Transverse colon (tissue), 4 donors: ENCODE measurements at regions of chr18 and their contacts with region 1.

Region 1: DNA sequence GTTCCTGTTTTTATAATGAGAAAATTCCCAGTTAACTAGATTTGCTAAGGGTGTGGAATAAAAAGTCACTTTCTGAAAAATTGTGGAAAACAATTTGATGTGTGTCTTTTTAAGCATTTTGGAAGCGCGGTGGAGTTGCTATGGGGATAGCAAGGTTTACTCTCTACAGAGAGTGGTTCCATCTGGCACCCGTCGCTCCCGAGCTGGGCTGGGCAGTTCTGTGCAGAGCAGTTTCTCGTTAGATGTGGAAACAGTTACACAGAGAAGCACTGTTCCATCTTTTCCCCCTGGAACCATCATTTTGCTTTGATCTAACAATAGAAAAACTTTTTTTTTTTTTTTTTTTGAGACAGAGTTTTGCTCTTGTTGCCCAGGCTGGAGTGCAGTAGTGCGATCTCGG is 17.4 kb downstream of the LDLRAD4 start:
- DNase-seq: no peak
- H3K4me3 ChIP-seq: no peak overlapping the region
- H3K27ac ChIP-seq: peak overlapping the region in 2 of 4 donors; percentile 29 to 53
- H3K4me1 ChIP-seq: peaks cover 0 to 21% (median 4%) of the 10 kb centered on the region in 4 donors
- H3K27me3 ChIP-seq: no peaks in the 10 kb centered on the region
- CTCF ChIP-seq: no peak
- EP300 ChIP-seq: no peak
- POLR2A ChIP-seq: no peak

Region 2: GRCh38 chr18:12520442-12520992 is 715.5 kb before region 1 on chr18:
- in situ Hi-C with region 1: no loop called
- intact Hi-C with region 1: no loop called
- DNase-seq: no peak
- H3K4me3 ChIP-seq: no peak overlapping the region
- H3K27ac ChIP-seq: no peak overlapping the region
- H3K4me1 ChIP-seq: peaks cover 0 to 11% (median 0%) of the 10 kb centered on the region in 4 donors
- H3K27me3 ChIP-seq: no peaks in the 10 kb centered on the region
- CTCF ChIP-seq: no peak
- EP300 ChIP-seq: no peak
- POLR2A ChIP-seq: no peak

Region 3: DNA sequence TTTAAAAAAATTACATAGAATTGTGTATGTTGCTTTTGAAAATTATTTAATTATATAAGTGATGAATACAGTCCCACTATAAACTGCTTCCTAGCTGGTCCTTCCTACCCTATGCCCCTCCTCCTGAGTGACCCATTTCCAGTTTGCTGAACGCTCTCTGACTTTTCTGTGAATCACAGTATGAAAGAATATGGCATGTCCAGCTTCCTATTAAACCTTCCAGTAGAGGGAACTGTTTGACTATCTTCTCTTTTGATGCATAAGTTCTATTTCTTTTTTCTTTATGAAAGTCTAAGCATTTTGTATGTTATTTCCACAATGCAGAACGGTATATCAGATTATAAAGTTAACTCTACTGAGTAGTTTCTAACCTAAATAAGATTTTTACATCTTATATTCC is 491.9 kb before region 1 on chr18:
- in situ Hi-C with region 1: no loop called
- intact Hi-C with region 1: no loop called
- DNase-seq: no peak
- H3K4me3 ChIP-seq: no peak overlapping the region
- H3K27ac ChIP-seq: no peak overlapping the region
- H3K4me1 ChIP-seq: no peaks in the 10 kb centered on the region
- H3K27me3 ChIP-seq: no peaks in the 10 kb centered on the region
- CTCF ChIP-seq: peak; percentile 47 to 54 (median 48)
- EP300 ChIP-seq: no peak
- POLR2A ChIP-seq: no peak

Region 4: GRCh38 chr18:12838178-12838634 is 397.8 kb before region 1 on chr18:
- in situ Hi-C with region 1: no loop called
- intact Hi-C with region 1: no loop called
- DNase-seq: peak; percentile 81
- H3K4me3 ChIP-seq: peak overlapping the region in 1 of 4 donors; percentile 21
- H3K27ac ChIP-seq: peak overlapping the region; percentile 79 to 83 (median 80)
- H3K4me1 ChIP-seq: peaks cover 4 to 41% (median 15%) of the 10 kb centered on the region in 4 donors
- H3K27me3 ChIP-seq: no peaks in the 10 kb centered on the region
- CTCF ChIP-seq: no peak
- EP300 ChIP-seq: no peak
- POLR2A ChIP-seq: peak; percentile 38

Region 5: GRCh38 chr18:13137670-13138419 is 98.1 kb before region 1 on chr18:
- in situ Hi-C with region 1: loop called in 1 of 4 experiments (anchors 25 kb)
- intact Hi-C with region 1: no loop called
- DNase-seq: peak; percentile 89
- H3K4me3 ChIP-seq: peak overlapping the region; percentile 31 to 71 (median 54)
- H3K27ac ChIP-seq: peak overlapping the region; percentile 78 to 85 (median 80)
- H3K4me1 ChIP-seq: peaks cover 0 to 18% (median 4%) of the 10 kb centered on the region in 4 donors
- H3K27me3 ChIP-seq: no peaks in the 10 kb centered on the region
- CTCF ChIP-seq: no peak
- EP300 ChIP-seq: no peak
- POLR2A ChIP-seq: peak; percentile 26

Region 6: GRCh38 chr18:13336841-13337240 is 100.9 kb after region 1 on chr18:
- in situ Hi-C with region 1: loop called in 1 of 4 experiments (anchors 25 kb)
- intact Hi-C with region 1: no loop called
- DNase-seq: no peak
- H3K4me3 ChIP-seq: no peak overlapping the region
- H3K27ac ChIP-seq: no peak overlapping the region
- H3K4me1 ChIP-seq: peaks cover 0 to 11% (median 0%) of the 10 kb centered on the region in 4 donors
- H3K27me3 ChIP-seq: no peaks in the 10 kb centered on the region
- CTCF ChIP-seq: no peak
- EP300 ChIP-seq: no peak
- POLR2A ChIP-seq: no peak

Region 7: GRCh38 chr18:13375302-13376255 is 139.6 kb after region 1 on chr18:
- in situ Hi-C with region 1: loop called in 1 of 4 experiments (anchors 25 kb)
- intact Hi-C with region 1: no loop called
- DNase-seq: no peak
- H3K4me3 ChIP-seq: no peak overlapping the region
- H3K27ac ChIP-seq: peak overlapping the region; percentile 49 to 64 (median 52)
- H3K4me1 ChIP-seq: peaks cover 9 to 39% (median 23%) of the 10 kb centered on the region in 4 donors
- H3K27me3 ChIP-seq: no peaks in the 10 kb centered on the region
- CTCF ChIP-seq: no peak
- EP300 ChIP-seq: no peak
- POLR2A ChIP-seq: no peak

Region 8: GRCh38 chr18:13558124-13558523 is 322.1 kb after region 1 on chr18:
- in situ Hi-C with region 1: no loop called
- intact Hi-C with region 1: no loop called
- DNase-seq: no peak
- H3K4me3 ChIP-seq: no peak overlapping the region
- H3K27ac ChIP-seq: no peak overlapping the region
- H3K4me1 ChIP-seq: peaks cover 0 to 25% (median 7%) of the 10 kb centered on the region in 4 donors
- H3K27me3 ChIP-seq: no peaks in the 10 kb centered on the region
- CTCF ChIP-seq: peak; percentile 37 to 59 (median 46)
- EP300 ChIP-seq: no peak
- POLR2A ChIP-seq: no peak